Heart right ventricle (tissue), 16 donors: ENCODE measurements at regions of chr10 and their contacts with region 1.

Region 1: DNA sequence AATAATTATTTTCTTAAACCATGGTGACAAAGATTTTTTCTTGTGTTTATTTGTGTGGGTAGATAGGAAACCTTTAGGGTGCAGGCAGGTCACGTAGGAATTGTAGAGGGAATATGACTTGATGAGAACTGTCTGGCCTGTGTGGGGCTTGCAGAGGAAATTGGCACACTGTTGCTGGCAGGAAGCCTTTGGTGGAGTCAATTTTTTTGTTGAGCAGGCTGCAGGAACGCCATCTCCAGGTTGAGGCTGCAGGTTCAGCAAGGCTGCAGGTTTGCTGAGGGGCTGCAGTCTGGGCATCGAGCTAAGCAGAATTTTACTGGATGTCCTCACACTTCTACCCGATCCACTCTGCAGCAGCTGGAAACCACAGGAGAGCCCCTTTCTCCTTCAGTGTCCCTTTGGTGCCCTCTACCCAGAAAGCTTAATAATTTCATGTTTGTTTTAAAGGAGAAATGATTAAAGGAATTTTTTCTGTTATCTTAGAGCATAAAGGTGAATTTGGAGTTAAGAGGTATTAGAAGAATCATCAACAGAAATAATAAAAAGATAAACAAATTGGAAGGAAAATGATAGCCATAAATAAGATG is 37.0 kb downstream of the TBC1D12 start:
- DNase-seq: no peak
- ATAC-seq: peak in 5 of 8 donors; percentile 27 to 65 (median 55)
- H3K4me3 ChIP-seq: no peak overlapping the region
- H3K27ac ChIP-seq: no peak overlapping the region
- H3K4me1 ChIP-seq: peaks cover 0 to 29% (median 8%) of the 10 kb centered on the region in 9 donors
- H3K27me3 ChIP-seq: no peaks in the 10 kb centered on the region
- CTCF ChIP-seq: peak in 1 of 9 donors; percentile 9

Region 2: GRCh38 chr10:94279835-94280709 is 159.3 kb before region 1 on chr10:
- intact Hi-C with region 1: loop called in 3 of 10 experiments (anchors 5 to 10 kb)
- DNase-seq: peak; percentile 22 to 59
- ATAC-seq: peak in 6 of 8 donors; percentile 43 to 87 (median 68)
- H3K4me3 ChIP-seq: no peak overlapping the region
- H3K27ac ChIP-seq: no peak overlapping the region
- H3K4me1 ChIP-seq: peaks cover 0 to 21% (median 7%) of the 10 kb centered on the region in 9 donors
- H3K27me3 ChIP-seq: no peaks in the 10 kb centered on the region
- CTCF ChIP-seq: peak; percentile 72 to 96 (median 86)

Region 3: GRCh38 chr10:94362360-94363250 is 76.8 kb before region 1 on chr10 and contains the start of gene NOC3L:
- intact Hi-C with region 1: loop called in 9 of 10 experiments (anchors 2 to 10 kb)
- DNase-seq: peak; percentile 93 to 96
- ATAC-seq: peak; percentile 99 to 100 (median 100)
- H3K4me3 ChIP-seq: peak within 1 kb of the TSS; percentile 39 to 84 (median 74)
- H3K27ac ChIP-seq: peak within 1 kb of the TSS in 9 of 10 donors; percentile 48 to 84 (median 72)
- H3K4me1 ChIP-seq: peaks cover 6 to 27% (median 15%) of the 10 kb centered on the region in 9 donors
- H3K27me3 ChIP-seq: peaks cover 0 to 4% (median 0%) of the 10 kb centered on the region in 7 donors
- CTCF ChIP-seq: peak; percentile 74 to 97 (median 92)
- total RNA-seq, gene NOC3L: 7.1 to 9.3 (median 8.0) TPM

Region 4: DNA sequence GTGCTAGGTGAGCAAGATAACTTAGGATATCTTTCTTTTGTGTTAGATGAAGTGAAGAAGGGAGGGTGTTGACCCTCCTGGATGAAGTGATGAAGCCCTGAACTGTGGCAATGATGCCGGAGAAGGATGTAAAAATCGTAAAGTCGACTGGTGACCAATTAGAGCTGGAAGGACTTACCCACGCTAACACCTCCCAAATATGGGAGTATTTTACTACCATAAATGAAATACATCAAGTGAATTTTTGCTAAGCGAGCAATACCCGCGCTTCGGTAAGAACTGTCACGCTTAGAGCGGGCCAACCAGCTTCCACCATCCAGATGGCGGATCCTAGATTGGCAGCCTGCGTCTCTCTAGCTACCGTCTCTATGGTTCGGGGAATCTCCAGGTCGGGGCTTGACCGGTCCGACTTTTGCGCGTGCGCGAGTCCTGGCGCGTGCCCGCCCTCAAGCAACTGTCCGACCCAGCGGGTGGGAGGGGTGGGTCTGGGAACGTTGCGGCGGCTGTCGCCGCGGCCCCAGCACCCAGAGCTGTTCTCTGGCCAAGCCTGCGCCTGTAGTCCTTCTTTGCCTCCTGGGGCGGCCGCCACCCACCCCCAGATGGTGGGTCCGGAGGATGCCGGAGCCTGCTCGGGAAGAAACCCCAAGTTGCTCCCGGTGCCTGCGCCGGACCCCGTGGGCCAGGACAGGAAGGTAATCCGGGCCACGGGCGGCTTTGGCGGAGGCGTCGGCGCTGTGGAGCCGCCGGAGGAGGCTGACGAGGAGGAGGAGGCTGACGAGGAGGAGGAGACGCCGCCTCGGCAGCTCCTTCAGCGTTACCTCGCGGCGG is 37.1 kb before region 1 on chr10 and contains the start of gene TBC1D12:
- intact Hi-C with region 1: loop called in 1 of 10 experiments (anchors 5 kb)
- DNase-seq: peak; percentile 96 to 97
- ATAC-seq: peak; percentile 97 to 99 (median 99)
- H3K4me3 ChIP-seq: peak within 1 kb of the TSS; percentile 53 to 98 (median 89)
- H3K27ac ChIP-seq: peak within 1 kb of the TSS; percentile 83 to 97 (median 94)
- H3K4me1 ChIP-seq: peaks cover 4 to 37% (median 20%) of the 10 kb centered on the region in 9 donors
- H3K27me3 ChIP-seq: peaks cover 0 to 69% (median 0%) of the 10 kb centered on the region in 7 donors
- CTCF ChIP-seq: no peak
- total RNA-seq, gene TBC1D12: 4.1 to 7.2 (median 5.0) TPM

Region 5: GRCh38 chr10:94878649-94879048 is 439.3 kb after region 1 on chr10:
- intact Hi-C with region 1: no loop called
- DNase-seq: no peak
- ATAC-seq: no peak
- H3K4me3 ChIP-seq: no peak overlapping the region
- H3K27ac ChIP-seq: no peak overlapping the region
- H3K4me1 ChIP-seq: no peaks in the 10 kb centered on the region
- H3K27me3 ChIP-seq: no peaks in the 10 kb centered on the region
- CTCF ChIP-seq: no peak